Body of pancreas (tissue), 4 donors: ENCODE measurements at regions of chr1 and their contacts with region 1.

Region 1: GRCh38 chr1:45303582-45304310 is 22.9 kb upstream of the HPDL start:
- DNase-seq: peak; percentile 99
- ATAC-seq: peak; percentile 94
- H3K4me3 ChIP-seq: peak overlapping the region; percentile 16 to 18
- H3K27ac ChIP-seq: peak overlapping the region; percentile 70 to 94 (median 87)
- H3K4me1 ChIP-seq: peaks cover 12% of the 10 kb centered on the region
- H3K27me3 ChIP-seq: no peaks in the 10 kb centered on the region
- CTCF ChIP-seq: peak; percentile 45 to 90 (median 84)
- POLR2A ChIP-seq: peak; percentile 71 to 92 (median 87)

Region 2: GRCh38 chr1:45018599-45019230 is 285.0 kb before region 1 on chr1:
- intact Hi-C with region 1: loop called (anchors 5 kb)
- DNase-seq: peak; percentile 82 to 86 (median 84)
- ATAC-seq: peak; percentile 91
- H3K4me3 ChIP-seq: no peak overlapping the region
- H3K27ac ChIP-seq: no peak overlapping the region
- H3K4me1 ChIP-seq: peaks cover 13% of the 10 kb centered on the region
- H3K27me3 ChIP-seq: no peaks in the 10 kb centered on the region
- CTCF ChIP-seq: peak; percentile 75 to 93 (median 91)
- POLR2A ChIP-seq: no peak